Common myeloid progenitor, CD34-positive (primary cell): ENCODE measurements at regions of chr5 and their contacts with region 1.

Region 1: DNA sequence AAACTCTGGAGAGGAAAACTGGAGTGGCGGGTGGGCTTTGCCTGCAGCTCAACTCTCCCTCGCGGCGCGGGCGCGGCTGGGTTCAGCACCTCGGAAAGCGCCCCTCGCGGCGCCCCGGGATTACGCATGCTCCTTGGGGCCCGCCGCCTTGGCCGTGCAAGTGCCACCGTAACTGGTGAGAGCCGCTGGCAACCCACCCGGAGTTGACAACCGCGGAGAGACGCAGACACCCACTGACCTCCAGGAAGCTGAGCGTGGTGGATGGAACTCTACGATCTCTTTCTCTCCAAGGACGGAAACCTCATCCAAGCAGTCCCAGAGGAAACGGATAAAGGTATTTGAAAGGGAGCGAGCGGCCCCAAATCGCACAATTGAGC is 194 bp upstream of the RXFP3 start:
- DNase-seq: peak; percentile 57 to 84 (median 80)
- H3K4me3 ChIP-seq: peak overlapping the region in 5 of 7 experiments; percentile 33 to 59 (median 46)
- H3K27ac ChIP-seq: no peak overlapping the region
- H3K4me1 ChIP-seq: peaks cover 0 to 12% (median 8%) of the 10 kb centered on the region in 4 experiments
- H3K27me3 ChIP-seq: peaks cover 0 to 63% (median 31%) of the 10 kb centered on the region in 5 experiments

Region 2: GRCh38 chr5:33440482-33441240 is 495.3 kb before region 1 on chr5 and contains the start of gene TARS1:
- CTCF ChIA-PET with region 1: interaction called, 12 read pairs
- POLR2A ChIA-PET with region 1: no interaction called
- DNase-seq: peak; percentile 100
- H3K4me3 ChIP-seq: peak within 1 kb of the TSS; percentile 72 to 100 (median 96)
- H3K27ac ChIP-seq: peak within 1 kb of the TSS; percentile 90 to 98
- H3K4me1 ChIP-seq: peaks cover 12 to 34% (median 19%) of the 10 kb centered on the region in 4 experiments
- H3K27me3 ChIP-seq: no peaks in the 10 kb centered on the region

Region 3: GRCh38 chr5:33649796-33650482 is 286.1 kb before region 1 on chr5:
- CTCF ChIA-PET with region 1: no interaction called
- POLR2A ChIA-PET with region 1: no interaction called
- DNase-seq: no peak
- H3K4me3 ChIP-seq: no peak overlapping the region
- H3K27ac ChIP-seq: no peak overlapping the region
- H3K4me1 ChIP-seq: no peaks in the 10 kb centered on the region
- H3K27me3 ChIP-seq: no peaks in the 10 kb centered on the region

Region 4: GRCh38 chr5:34042321-34042720 is 106.3 kb after region 1 on chr5:
- CTCF ChIA-PET with region 1: no interaction called
- POLR2A ChIA-PET with region 1: no interaction called
- DNase-seq: peak in 2 of 3 donors; percentile 13 to 22
- H3K4me3 ChIP-seq: no peak overlapping the region
- H3K27ac ChIP-seq: no peak overlapping the region
- H3K4me1 ChIP-seq: peaks cover 4 to 17% (median 13%) of the 10 kb centered on the region in 4 experiments
- H3K27me3 ChIP-seq: no peaks in the 10 kb centered on the region